SK-N-SH (cell line): ENCODE measurements at regions of chr1 and their contacts with region 1.

Region 1: GRCh38 chr1:65209005-65209885 is 61.2 kb downstream of the AK4 start:
- DNase-seq: peak; percentile 69
- H3K4me3 ChIP-seq: no peak overlapping the region
- H3K27ac ChIP-seq: no peak overlapping the region
- H3K4me1 ChIP-seq: no peaks in the 10 kb centered on the region
- H3K27me3 ChIP-seq: no peaks in the 10 kb centered on the region
- CTCF ChIP-seq: peak; percentile 72
- EP300 ChIP-seq: no peak
- RAD21 ChIP-seq: peak; percentile 69

Region 2: GRCh38 chr1:64564891-64565290 is 644.4 kb before region 1 on chr1:
- CTCF ChIA-PET with region 1: no interaction called
- POLR2A ChIA-PET with region 1: no interaction called
- DNase-seq: no peak
- H3K4me3 ChIP-seq: no peak overlapping the region
- H3K27ac ChIP-seq: no peak overlapping the region
- H3K4me1 ChIP-seq: peaks cover 0 to 2% of the 10 kb centered on the region in 2 experiments; a peak in 2 of 4 replicates
- H3K27me3 ChIP-seq: no peaks in the 10 kb centered on the region
- CTCF ChIP-seq: no peak
- EP300 ChIP-seq: no peak
- RAD21 ChIP-seq: no peak

Region 3: DNA sequence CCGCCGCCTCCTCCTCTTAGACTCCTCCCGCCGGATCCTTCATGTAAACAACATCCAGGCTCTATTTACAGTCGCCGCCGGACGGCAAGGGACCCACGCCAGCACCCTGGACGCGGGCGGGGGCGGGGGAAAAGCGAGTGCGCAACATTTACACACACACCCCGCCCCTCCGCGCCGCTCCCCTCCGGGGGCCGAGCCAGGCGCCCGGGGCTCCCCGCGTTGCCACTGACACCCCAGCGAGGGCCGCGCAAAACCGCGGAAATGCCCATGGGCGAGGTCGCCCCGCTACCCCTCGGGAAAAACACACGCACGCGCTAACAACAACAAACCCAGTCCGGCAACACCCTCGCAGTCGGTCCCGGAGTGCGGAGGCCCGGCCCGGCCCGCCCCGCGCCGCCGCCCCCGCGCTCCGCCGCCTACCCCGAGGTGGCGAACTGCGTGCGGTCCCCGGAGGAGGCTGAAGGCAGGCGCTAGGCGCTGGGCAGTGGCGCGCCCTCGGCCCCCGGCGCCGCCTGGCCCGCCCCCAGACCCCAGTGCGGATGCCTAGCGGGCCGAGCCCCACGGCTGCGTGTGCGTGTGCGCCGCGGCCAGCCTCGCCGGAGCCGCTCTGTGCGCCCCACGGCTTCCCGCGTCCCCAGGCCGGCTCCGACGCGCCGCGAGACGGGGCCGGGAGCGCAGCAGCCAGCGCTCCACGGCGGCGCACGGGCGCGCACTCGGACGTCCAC is 142.3 kb before region 1 on chr1:
- CTCF ChIA-PET with region 1: interaction called, 45 read pairs
- POLR2A ChIA-PET with region 1: no interaction called
- DNase-seq: peak; percentile 87
- H3K4me3 ChIP-seq: peak overlapping the region; percentile 80 to 85
- H3K27ac ChIP-seq: peak overlapping the region in 1 of 2 experiments; percentile 87; a peak in 2 of 4 replicates
- H3K4me1 ChIP-seq: peaks cover 7 to 16% of the 10 kb centered on the region in 2 experiments; a peak in 3 of 4 replicates
- H3K27me3 ChIP-seq: no peaks in the 10 kb centered on the region
- CTCF ChIP-seq: no peak
- EP300 ChIP-seq: no peak
- RAD21 ChIP-seq: no peak

Region 4: GRCh38 chr1:65075123-65075976 is 133.9 kb before region 1 on chr1:
- CTCF ChIA-PET with region 1: interaction called, 15 read pairs
- POLR2A ChIA-PET with region 1: no interaction called
- DNase-seq: peak; percentile 62
- H3K4me3 ChIP-seq: no peak overlapping the region
- H3K27ac ChIP-seq: no peak overlapping the region
- H3K4me1 ChIP-seq: no peaks in the 10 kb centered on the region
- H3K27me3 ChIP-seq: no peaks in the 10 kb centered on the region
- CTCF ChIP-seq: peak; percentile 73
- EP300 ChIP-seq: no peak
- RAD21 ChIP-seq: peak; percentile 76

Region 5: DNA sequence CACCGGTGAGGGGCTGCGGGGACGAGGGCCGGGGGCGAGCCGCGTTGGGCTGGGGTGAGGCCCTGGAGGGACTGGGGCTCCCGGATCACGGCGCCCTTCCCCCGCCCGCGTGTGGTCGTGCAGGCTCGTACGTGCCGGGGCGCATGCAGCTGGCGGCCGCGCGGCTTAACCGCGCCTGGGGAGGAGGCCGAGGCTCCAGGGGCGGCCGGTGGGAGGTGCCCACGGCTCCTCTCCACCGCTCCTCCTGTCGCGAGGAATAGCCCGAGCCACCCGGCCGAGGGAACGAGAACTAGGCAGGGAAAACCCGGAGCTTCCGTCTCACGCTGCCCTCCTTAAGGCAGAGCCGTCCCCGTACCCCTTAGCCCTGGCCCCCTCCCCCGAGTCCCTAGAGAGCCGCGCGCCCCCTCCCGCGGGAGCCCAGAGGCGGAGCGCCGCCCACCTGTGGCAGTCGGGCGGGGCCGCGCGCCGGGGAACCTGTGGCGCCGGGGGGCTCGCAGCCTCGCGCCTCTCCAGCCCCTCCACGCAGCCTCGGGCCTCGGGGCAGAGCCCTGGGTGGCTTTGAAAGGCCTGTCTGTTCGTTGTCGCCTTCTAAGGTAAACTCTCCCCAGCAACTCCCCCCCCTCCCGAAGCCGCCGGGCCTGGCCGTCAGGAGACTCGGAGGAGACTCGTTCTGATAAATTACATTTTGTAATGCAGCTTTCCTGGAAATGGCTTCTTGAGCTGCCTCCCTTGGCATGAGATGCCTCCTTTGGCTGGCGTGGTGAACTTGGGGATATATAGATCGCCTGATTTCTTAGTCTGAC is 60.5 kb before region 1 on chr1:
- CTCF ChIA-PET with region 1: interaction called, 14 read pairs
- POLR2A ChIA-PET with region 1: no interaction called
- DNase-seq: peak; percentile 85
- H3K4me3 ChIP-seq: peak overlapping the region; percentile 71
- H3K27ac ChIP-seq: peak overlapping the region in 1 of 2 experiments; percentile 39; a peak in 1 of 4 replicates
- H3K4me1 ChIP-seq: peaks cover 6 to 11% of the 10 kb centered on the region in 2 experiments; a peak in 2 of 4 replicates
- H3K27me3 ChIP-seq: no peaks in the 10 kb centered on the region; the same call in 1 of the 2 replicates
- CTCF ChIP-seq: no peak
- EP300 ChIP-seq: no peak
- RAD21 ChIP-seq: no peak

Region 6: GRCh38 chr1:65180977-65181376 is 28.3 kb before region 1 on chr1:
- CTCF ChIA-PET with region 1: interaction called, 11 read pairs
- POLR2A ChIA-PET with region 1: no interaction called
- DNase-seq: no peak
- H3K4me3 ChIP-seq: no peak overlapping the region
- H3K27ac ChIP-seq: no peak overlapping the region
- H3K4me1 ChIP-seq: peaks cover 6 to 15% of the 10 kb centered on the region in 2 experiments; a peak in 2 of 4 replicates
- H3K27me3 ChIP-seq: no peaks in the 10 kb centered on the region
- CTCF ChIP-seq: no peak
- EP300 ChIP-seq: no peak
- RAD21 ChIP-seq: no peak

Region 7: GRCh38 chr1:65224681-65225091 is 15.4 kb after region 1 on chr1:
- CTCF ChIA-PET with region 1: interaction called, 24 read pairs
- POLR2A ChIA-PET with region 1: no interaction called
- DNase-seq: no peak
- H3K4me3 ChIP-seq: no peak overlapping the region
- H3K27ac ChIP-seq: no peak overlapping the region
- H3K4me1 ChIP-seq: no peaks in the 10 kb centered on the region
- H3K27me3 ChIP-seq: no peaks in the 10 kb centered on the region
- CTCF ChIP-seq: no peak
- EP300 ChIP-seq: no peak
- RAD21 ChIP-seq: no peak

Region 8: GRCh38 chr1:65230731-65231481 is 21.7 kb after region 1 on chr1:
- CTCF ChIA-PET with region 1: interaction called, 10 read pairs
- POLR2A ChIA-PET with region 1: no interaction called
- DNase-seq: no peak
- H3K4me3 ChIP-seq: no peak overlapping the region
- H3K27ac ChIP-seq: no peak overlapping the region
- H3K4me1 ChIP-seq: peaks cover 0 to 8% of the 10 kb centered on the region in 2 experiments; a peak in 3 of 4 replicates
- H3K27me3 ChIP-seq: no peaks in the 10 kb centered on the region
- CTCF ChIP-seq: no peak
- EP300 ChIP-seq: no peak
- RAD21 ChIP-seq: no peak

Region 9: GRCh38 chr1:65467536-65467935 is 258.3 kb after region 1 on chr1:
- CTCF ChIA-PET with region 1: no interaction called
- POLR2A ChIA-PET with region 1: no interaction called
- DNase-seq: no peak
- H3K4me3 ChIP-seq: no peak overlapping the region
- H3K27ac ChIP-seq: no peak overlapping the region
- H3K4me1 ChIP-seq: peaks cover 4 to 8% of the 10 kb centered on the region in 2 experiments; a peak in 3 of 4 replicates
- H3K27me3 ChIP-seq: no peaks in the 10 kb centered on the region
- CTCF ChIP-seq: no peak
- EP300 ChIP-seq: no peak
- RAD21 ChIP-seq: no peak